ENCODE measurements at regions of chr4 and their contacts with region 1.

Region 1: DNA sequence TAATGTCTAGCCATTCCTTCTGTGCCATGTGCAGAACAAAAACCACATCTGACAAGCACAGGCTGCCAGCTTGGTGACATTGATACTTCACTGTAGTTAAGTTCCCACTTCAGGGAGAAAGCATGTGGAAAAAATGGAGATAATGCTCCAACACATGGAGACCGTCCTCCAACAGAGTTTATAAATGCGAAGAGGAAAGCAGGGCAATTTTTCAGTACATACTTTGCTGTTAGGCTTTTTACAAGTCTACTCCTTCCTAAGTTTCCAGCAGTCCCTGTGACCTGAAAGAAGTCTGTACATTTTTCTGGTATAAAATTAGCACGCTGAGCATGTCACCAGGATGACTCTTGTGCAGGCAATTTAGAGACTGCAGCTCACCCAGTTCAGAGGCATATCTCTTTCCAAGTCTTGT is 766.9 kb upstream of the IGFBP7 start:
- DNase-seq: peak in 3 of 5 donors; percentile 10 to 32 (median 20)
- ATAC-seq: peak; percentile 90 to 93 (median 92)
- H3K4me3 ChIP-seq: no peak overlapping the region
- H3K27ac ChIP-seq: peak overlapping the region in 11 of 12 donors; percentile 39 to 86 (median 65)
- H3K4me1 ChIP-seq: peaks cover 0 to 21% (median 0%) of the 10 kb centered on the region in 12 donors
- H3K27me3 ChIP-seq: no peaks in the 10 kb centered on the region
- CTCF ChIP-seq: no peak
- POLR2A ChIP-seq: no peak

Region 2: DNA sequence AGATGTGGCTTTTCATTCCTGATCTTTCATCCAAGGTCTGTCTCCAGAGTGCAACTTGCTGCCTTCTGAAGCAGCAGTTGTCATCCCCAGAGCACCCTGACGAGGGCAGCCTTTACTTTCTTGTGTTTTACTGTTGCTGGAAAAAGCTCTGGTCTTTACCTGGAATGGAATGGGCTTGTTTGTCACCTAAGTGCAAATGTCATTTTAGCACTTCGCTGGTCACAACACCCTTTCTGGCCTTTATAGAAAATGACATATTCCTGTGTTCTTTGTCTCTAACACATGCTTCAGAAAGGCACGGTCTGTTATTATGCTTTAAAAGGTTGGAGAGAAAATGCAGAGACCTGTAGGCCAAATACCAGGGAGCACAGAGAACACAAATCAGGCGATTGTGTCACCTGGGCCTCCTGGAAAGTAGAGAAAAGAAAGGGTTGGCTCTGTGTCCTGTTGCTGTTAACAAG is 434.2 kb before region 1 on chr4:
- intact Hi-C with region 1: loop called in 1 of 10 experiments (anchors 5 kb)
- DNase-seq: peak in 3 of 5 donors; percentile 22 to 43 (median 31)
- ATAC-seq: peak; percentile 62 to 82 (median 69)
- H3K4me3 ChIP-seq: no peak overlapping the region
- H3K27ac ChIP-seq: peak overlapping the region in 2 of 12 donors; percentile 1 to 30
- H3K4me1 ChIP-seq: peaks cover 0 to 16% (median 0%) of the 10 kb centered on the region in 12 donors
- H3K27me3 ChIP-seq: no peaks in the 10 kb centered on the region
- CTCF ChIP-seq: peak; percentile 55 to 80 (median 69)
- POLR2A ChIP-seq: no peak

Region 3: DNA sequence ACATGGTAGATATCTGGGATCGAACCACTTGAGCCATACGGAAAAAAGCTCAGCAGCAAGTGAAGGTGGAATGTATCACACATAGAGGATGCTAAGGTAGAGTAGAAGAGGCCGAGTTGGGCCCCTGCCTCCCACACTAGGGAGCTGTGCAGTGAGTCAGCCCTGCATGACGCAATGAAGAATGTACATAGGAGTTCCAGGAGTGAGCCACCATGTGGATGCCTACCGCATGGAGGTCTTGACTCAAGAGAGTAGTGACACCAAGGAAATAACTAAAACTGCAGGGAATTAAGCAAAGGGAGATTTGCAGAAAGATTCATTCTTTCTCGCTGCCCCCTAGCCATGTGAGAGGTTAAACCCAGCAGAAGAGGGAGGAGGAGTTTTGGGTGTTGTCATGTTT is 377.3 kb before region 1 on chr4:
- intact Hi-C with region 1: loop called in 1 of 10 experiments (anchors 10 kb)
- DNase-seq: no peak
- ATAC-seq: no peak
- H3K4me3 ChIP-seq: no peak overlapping the region
- H3K27ac ChIP-seq: no peak overlapping the region
- H3K4me1 ChIP-seq: peaks cover 0 to 13% (median 0%) of the 10 kb centered on the region in 12 donors
- H3K27me3 ChIP-seq: no peaks in the 10 kb centered on the region
- CTCF ChIP-seq: no peak
- POLR2A ChIP-seq: no peak

Region 4: GRCh38 chr4:57926311-57926710 is 49.3 kb after region 1 on chr4:
- intact Hi-C with region 1: no loop called
- DNase-seq: no peak
- ATAC-seq: no peak
- H3K4me3 ChIP-seq: no peak overlapping the region
- H3K27ac ChIP-seq: no peak overlapping the region
- H3K4me1 ChIP-seq: peaks cover 0 to 5% (median 0%) of the 10 kb centered on the region in 12 donors
- H3K27me3 ChIP-seq: no peaks in the 10 kb centered on the region
- CTCF ChIP-seq: no peak
- POLR2A ChIP-seq: no peak